ENCODE measurements at regions of chr7 and their contacts with region 1.

Region 1: GRCh38 chr7:151057989-151058780 is 488 bp upstream of the CDK5 start:
- DNase-seq: peak; percentile 99 to 100
- ATAC-seq: peak; percentile 54 to 82
- H3K4me3 ChIP-seq: peak overlapping the region; percentile 86
- H3K27ac ChIP-seq: peak overlapping the region; percentile 99
- H3K4me1 ChIP-seq: peaks cover 24% of the 10 kb centered on the region
- CTCF ChIP-seq: no peak
- EP300 ChIP-seq: no peak
- POLR2A ChIP-seq: peak; percentile 75
- RAD21 ChIP-seq: no peak

Region 2: DNA sequence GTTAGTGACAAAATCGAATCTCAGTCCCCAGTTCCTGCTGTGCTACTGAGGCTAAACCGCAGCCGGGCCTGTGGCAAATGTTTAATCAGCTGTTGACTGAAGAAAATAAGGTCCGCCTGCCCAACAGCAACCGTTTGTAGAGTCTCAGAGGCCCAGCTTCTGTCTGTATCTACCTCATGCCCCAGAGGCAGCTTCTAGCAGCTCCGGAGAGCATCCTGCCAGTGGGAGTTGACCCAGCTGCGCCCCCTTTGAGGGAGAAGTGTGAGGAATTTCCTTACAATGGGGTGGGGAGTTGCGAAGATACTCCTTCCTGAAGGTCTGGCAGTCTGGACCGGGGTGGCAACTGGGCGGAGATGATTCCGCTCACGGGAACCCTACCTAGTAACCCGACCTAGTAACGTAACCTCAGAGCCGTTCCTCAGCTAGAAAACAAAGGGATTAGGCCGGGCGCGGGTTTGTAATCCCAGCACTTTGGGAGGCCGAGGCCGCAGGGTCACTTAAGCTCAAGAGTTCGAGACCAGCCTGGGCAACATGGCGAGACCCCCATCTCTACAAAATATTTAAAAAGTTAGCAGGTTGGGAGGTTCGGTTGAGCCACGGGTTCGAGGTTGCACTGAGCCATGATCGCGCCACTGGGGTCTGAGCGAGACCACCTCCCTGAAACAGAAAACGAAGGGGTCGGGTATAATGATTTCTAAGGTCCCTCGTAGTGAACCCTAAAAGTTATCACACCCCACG is 679.9 kb before region 1 on chr7:
- CTCF ChIA-PET with region 1: no interaction called
- POLR2A ChIA-PET with region 1: no interaction called
- DNase-seq: peak; percentile 72 to 84
- ATAC-seq: peak; percentile 54 to 60
- H3K4me3 ChIP-seq: peak overlapping the region; percentile 90
- H3K27ac ChIP-seq: peak overlapping the region; percentile 97 to 100
- H3K4me1 ChIP-seq: peaks cover 37% of the 10 kb centered on the region
- CTCF ChIP-seq: peak; percentile 29; the same call in 2 of the 3 replicates
- EP300 ChIP-seq: no peak
- POLR2A ChIP-seq: peak; percentile 17; the same call in 1 of the 2 replicates
- RAD21 ChIP-seq: 0 out of 5 replicates have a peak, but pooled peaks have one; percentile 18

Region 3: DNA sequence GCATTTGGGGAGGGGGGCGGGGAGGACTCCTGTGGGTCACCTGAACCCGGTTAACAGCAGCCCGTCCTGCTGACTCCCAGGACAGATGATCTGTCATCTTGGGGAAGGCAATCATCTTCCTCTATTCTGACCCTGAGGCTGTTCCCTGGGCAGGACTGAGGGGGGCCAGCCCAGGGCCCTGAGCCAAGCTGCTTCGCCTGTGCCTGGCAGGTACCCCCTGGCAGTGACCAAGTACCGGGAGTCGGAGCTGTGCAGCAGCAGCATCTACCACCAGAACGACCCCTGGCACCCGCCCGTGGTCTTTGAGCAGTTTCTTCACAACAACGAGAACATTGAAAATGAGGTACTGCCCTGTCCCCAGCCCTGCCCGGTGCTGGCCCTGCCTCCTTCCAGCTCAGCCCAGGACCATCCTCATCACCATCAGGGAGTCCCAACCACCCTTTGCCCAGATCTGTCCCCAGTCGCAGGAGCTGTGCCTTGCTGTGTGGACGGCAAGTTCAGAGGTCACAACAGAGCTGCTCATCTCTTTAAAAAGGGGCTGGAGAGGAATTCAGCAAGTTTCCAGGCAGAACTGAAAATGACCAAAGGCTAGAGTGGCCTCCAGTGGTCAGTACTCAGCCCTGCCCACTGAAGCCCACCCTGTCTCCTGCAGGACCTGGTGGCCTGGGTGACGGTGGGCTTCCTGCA is 197.8 kb before region 1 on chr7:
- CTCF ChIA-PET with region 1: no interaction called
- POLR2A ChIA-PET with region 1: no interaction called
- DNase-seq: no peak
- ATAC-seq: no peak; a peak in 1 of 6 replicates
- H3K4me3 ChIP-seq: no peak overlapping the region
- H3K27ac ChIP-seq: no peak overlapping the region
- H3K4me1 ChIP-seq: no peaks in the 10 kb centered on the region
- CTCF ChIP-seq: no peak
- EP300 ChIP-seq: no peak
- POLR2A ChIP-seq: no peak
- RAD21 ChIP-seq: no peak

Region 4: DNA sequence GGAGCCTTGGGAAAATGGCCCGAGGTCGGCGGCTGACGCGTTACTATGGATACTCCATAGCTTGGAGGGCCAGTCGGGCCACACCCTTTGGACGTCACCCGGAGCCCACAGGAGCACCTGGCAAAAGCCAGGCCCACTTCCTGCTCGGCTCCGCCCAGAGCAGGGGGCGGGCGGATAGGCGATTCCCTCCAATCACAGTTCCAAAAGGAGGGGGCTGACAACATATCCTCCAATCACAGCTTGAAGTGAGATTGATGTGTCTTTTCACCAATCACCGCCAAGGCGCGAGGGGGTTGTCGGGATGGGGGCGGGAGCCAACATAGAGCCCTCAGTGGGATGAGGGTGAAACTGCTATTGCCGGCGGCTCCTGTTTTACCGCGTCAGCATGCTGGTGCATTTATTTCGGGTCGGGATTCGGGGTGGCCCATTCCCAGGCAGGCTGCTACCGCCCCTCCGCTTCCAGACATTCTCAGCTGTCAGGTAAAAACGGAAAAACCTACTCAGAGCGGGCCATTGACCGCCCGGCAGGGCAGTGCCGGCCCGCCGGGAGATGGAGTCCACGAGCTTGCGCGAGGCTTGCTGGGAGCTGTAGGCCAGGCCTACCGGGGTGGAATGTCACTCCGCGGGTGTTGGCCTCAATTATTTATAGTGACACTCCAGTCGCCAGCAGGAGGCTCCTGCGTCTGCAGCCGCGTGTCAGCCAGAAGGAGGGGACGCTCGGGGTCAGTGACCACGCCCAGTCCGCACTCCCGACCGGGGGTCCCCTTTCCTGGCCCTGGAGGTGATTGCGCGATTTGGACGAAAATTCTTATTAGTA is 29.8 kb before region 1 on chr7 and contains the start of gene ABCB8:
- CTCF ChIA-PET with region 1: interaction called, 14 read pairs
- POLR2A ChIA-PET with region 1: interaction called, 6 read pairs
- DNase-seq: peak; percentile 99 to 100
- ATAC-seq: peak; percentile 95 to 96
- H3K4me3 ChIP-seq: peak within 1 kb of the TSS; percentile 49
- H3K27ac ChIP-seq: peak within 1 kb of the TSS; percentile 73 to 90
- H3K4me1 ChIP-seq: peaks cover 21% of the 10 kb centered on the region; the same call in 2 of the 3 replicates
- CTCF ChIP-seq: peak; percentile 53
- EP300 ChIP-seq: no peak
- POLR2A ChIP-seq: peak; percentile 61
- RAD21 ChIP-seq: peak; percentile 56 to 65
- polyA plus RNA-seq, gene ABCB8: 19.6 and 22.7 TPM in 2 replicates

Region 5: GRCh38 chr7:151038951-151039849 is 19.0 kb before region 1 on chr7:
- CTCF ChIA-PET with region 1: interaction called, 6 read pairs
- POLR2A ChIA-PET with region 1: interaction called, 10 read pairs
- DNase-seq: peak; percentile 79 to 93
- ATAC-seq: peak; percentile 81 to 88
- H3K4me3 ChIP-seq: no peak overlapping the region
- H3K27ac ChIP-seq: peak overlapping the region; percentile 79 to 88
- H3K4me1 ChIP-seq: peaks cover 33% of the 10 kb centered on the region
- CTCF ChIP-seq: no peak
- EP300 ChIP-seq: no peak
- POLR2A ChIP-seq: peak; percentile 48
- RAD21 ChIP-seq: peak in 1 of 2 experiments; percentile 5; a peak in 2 of 5 replicates

Region 6: DNA sequence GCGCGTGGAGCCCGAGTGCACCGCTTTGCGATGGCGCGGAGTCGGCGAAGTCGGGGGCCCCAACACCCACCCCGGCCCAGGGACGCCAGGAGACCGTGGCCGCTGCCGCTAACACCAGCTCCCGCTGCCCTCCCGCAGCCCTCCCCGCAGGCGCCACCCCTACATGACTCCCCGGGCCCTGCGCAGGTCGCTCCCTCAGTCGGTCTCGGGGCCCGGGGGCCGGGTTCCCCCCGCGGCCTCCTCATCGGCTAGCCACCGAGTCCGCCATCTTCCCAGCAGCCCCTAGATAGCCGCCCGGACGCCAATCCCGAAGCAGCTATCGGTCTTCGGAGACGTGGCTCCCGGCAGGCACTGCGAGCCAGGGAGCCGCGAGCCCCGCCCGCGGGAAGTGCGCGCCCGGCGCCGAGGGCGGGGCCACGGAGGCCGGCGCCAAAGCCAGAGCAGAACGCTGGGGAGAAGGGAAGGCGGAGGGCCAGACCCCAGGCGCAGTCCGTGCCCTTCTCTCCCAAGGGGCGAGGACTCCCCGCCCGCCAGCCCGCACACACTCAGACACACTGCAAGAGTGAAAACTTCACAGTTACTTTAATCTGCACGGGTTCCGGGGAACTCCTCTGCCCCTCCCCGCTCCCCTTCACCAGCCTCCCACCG is 22.5 kb after region 1 on chr7 and contains the start of gene FASTK:
- CTCF ChIA-PET with region 1: interaction called, 64 read pairs
- POLR2A ChIA-PET with region 1: interaction called, 20 read pairs
- DNase-seq: peak; percentile 89 to 92
- ATAC-seq: peak; percentile 51 to 82
- H3K4me3 ChIP-seq: peak within 1 kb of the TSS; percentile 93
- H3K27ac ChIP-seq: peak within 1 kb of the TSS; percentile 98
- H3K4me1 ChIP-seq: peaks cover 61% of the 10 kb centered on the region
- CTCF ChIP-seq: no peak
- EP300 ChIP-seq: no peak
- POLR2A ChIP-seq: peak; percentile 82
- RAD21 ChIP-seq: no peak
- polyA plus RNA-seq, gene FASTK: 38.5 and 51.7 TPM in 2 replicates

Region 7: GRCh38 chr7:151085691-151086620 is 27.8 kb after region 1 on chr7 and contains the start of gene AGAP3:
- CTCF ChIA-PET with region 1: interaction called, 32 read pairs
- POLR2A ChIA-PET with region 1: interaction called, 14 read pairs
- DNase-seq: peak; percentile 76 to 79
- ATAC-seq: peak; percentile 50 to 74
- H3K4me3 ChIP-seq: peak within 1 kb of the TSS; percentile 86
- H3K27ac ChIP-seq: peak within 1 kb of the TSS; percentile 84 to 98
- H3K4me1 ChIP-seq: peaks cover 43% of the 10 kb centered on the region
- CTCF ChIP-seq: no peak
- EP300 ChIP-seq: no peak
- POLR2A ChIP-seq: peak; percentile 81
- RAD21 ChIP-seq: no peak
- polyA plus RNA-seq, gene AGAP3: 33.8 and 34.1 TPM in 2 replicates

Region 8: GRCh38 chr7:151252961-151253711 is 195.0 kb after region 1 on chr7:
- CTCF ChIA-PET with region 1: no interaction called
- POLR2A ChIA-PET with region 1: no interaction called
- DNase-seq: no peak
- ATAC-seq: no peak
- H3K4me3 ChIP-seq: no peak overlapping the region
- H3K27ac ChIP-seq: peak overlapping the region in 1 of 2 experiments; percentile 94; a peak in 1 of 6 replicates
- H3K4me1 ChIP-seq: peaks cover 24% of the 10 kb centered on the region
- CTCF ChIP-seq: no peak
- EP300 ChIP-seq: no peak
- POLR2A ChIP-seq: no peak
- RAD21 ChIP-seq: no peak

Region 9: GRCh38 chr7:151381348-151382078 is 323.3 kb after region 1 on chr7:
- CTCF ChIA-PET with region 1: no interaction called
- POLR2A ChIA-PET with region 1: no interaction called
- DNase-seq: no peak
- ATAC-seq: peak in 1 of 2 experiments; percentile 16; a peak in 3 of 6 replicates
- H3K4me3 ChIP-seq: peak overlapping the region; percentile 18; the same call in 2 of the 3 replicates
- H3K27ac ChIP-seq: no peak overlapping the region; a peak in 1 of 6 replicates
- H3K4me1 ChIP-seq: 0 out of 3 replicates have a peak, but pooled peaks cover 5% of the 10 kb centered on the region
- CTCF ChIP-seq: no peak
- EP300 ChIP-seq: no peak
- POLR2A ChIP-seq: no peak
- RAD21 ChIP-seq: no peak